Heart left ventricle (tissue), 16 donors: ENCODE measurements at regions of chr11 and their contacts with region 1.

Region 1: GRCh38 chr11:9757809-9758636 is 94.1 kb downstream of the SWAP70 start:
- DNase-seq: peak; percentile 89 to 95 (median 91)
- ATAC-seq: peak; percentile 34 to 75 (median 64)
- H3K4me3 ChIP-seq: peak overlapping the region; percentile 34 to 90 (median 74)
- H3K27ac ChIP-seq: peak overlapping the region; percentile 77 to 99 (median 92)
- H3K4me1 ChIP-seq: peaks cover 4 to 60% (median 38%) of the 10 kb centered on the region in 12 donors
- H3K27me3 ChIP-seq: no peaks in the 10 kb centered on the region
- CTCF ChIP-seq: peak; percentile 43 to 98 (median 88)
- POLR2A ChIP-seq: peak in 1 of 2 donors; percentile 42

Region 2: GRCh38 chr11:9534791-9535781 is 222.9 kb before region 1 on chr11:
- intact Hi-C with region 1: loop called in 3 of 10 experiments (anchors 10 kb)
- DNase-seq: peak; percentile 62 to 88 (median 75)
- ATAC-seq: peak; percentile 49 to 87 (median 80)
- H3K4me3 ChIP-seq: no peak overlapping the region
- H3K27ac ChIP-seq: no peak overlapping the region
- H3K4me1 ChIP-seq: peaks cover 0 to 12% (median 2%) of the 10 kb centered on the region in 12 donors
- H3K27me3 ChIP-seq: no peaks in the 10 kb centered on the region
- CTCF ChIP-seq: peak; percentile 59 to 88 (median 74)
- POLR2A ChIP-seq: no peak

Region 3: GRCh38 chr11:9580894-9581293 is 177.1 kb before region 1 on chr11:
- intact Hi-C with region 1: no loop called
- DNase-seq: no peak
- ATAC-seq: no peak
- H3K4me3 ChIP-seq: no peak overlapping the region
- H3K27ac ChIP-seq: no peak overlapping the region
- H3K4me1 ChIP-seq: peaks cover 0 to 23% (median 2%) of the 10 kb centered on the region in 12 donors
- H3K27me3 ChIP-seq: no peaks in the 10 kb centered on the region
- CTCF ChIP-seq: no peak
- POLR2A ChIP-seq: no peak

Region 4: DNA sequence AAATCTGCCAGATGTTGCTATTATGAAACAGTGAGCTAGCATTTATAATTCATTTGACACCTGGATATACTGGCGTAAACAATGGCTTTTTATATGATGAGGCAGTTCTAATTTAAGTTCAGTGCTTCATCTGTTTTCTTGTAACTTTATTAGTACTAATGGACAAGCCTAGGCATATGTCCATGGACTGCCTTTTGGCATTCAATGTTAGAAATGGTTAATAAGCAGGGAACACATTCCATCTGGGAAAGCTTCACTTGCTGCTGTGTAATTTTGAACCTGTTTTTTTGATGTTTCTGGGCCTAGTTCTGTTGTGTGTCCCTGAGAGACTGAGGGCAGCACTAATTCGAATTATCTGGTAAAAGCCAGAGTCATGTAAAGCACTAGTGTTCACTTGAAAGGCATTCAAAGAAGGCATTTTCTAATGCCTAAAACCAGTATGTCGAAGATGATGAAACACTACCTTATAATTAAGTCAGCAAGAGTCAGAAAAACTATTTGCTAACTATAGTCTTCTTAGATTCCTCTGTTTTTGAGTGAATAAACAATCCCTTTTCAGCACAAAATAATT is 44.4 kb after region 1 on chr11:
- intact Hi-C with region 1: loop called in 1 of 10 experiments (anchors 5 kb)
- DNase-seq: no peak
- ATAC-seq: peak; percentile 60 to 90 (median 83)
- H3K4me3 ChIP-seq: no peak overlapping the region
- H3K27ac ChIP-seq: peak overlapping the region; percentile 21 to 78 (median 66)
- H3K4me1 ChIP-seq: peaks cover 2 to 39% (median 28%) of the 10 kb centered on the region in 12 donors
- H3K27me3 ChIP-seq: no peaks in the 10 kb centered on the region
- CTCF ChIP-seq: no peak
- POLR2A ChIP-seq: no peak

Region 5: DNA sequence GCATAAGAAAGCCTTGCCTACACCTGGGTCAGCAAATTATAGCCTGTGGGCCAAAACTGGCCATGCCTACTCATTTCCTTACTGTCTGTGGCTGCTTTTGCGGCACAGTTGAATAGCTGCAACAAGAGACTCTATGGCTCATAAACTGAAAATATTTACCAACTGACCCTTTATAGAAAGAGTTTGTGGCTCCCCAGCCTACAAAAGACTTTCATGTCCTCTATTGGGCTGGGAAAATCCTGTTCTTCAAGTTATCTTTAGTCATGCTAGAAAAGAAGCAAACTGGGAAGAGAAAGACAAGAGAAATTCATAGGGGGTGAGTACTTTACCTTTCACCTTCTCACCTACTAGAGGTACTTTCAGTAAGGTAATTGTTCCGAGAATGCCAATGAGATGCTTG is 80.9 kb after region 1 on chr11:
- intact Hi-C with region 1: loop called in 1 of 10 experiments (anchors 10 kb)
- DNase-seq: no peak
- ATAC-seq: no peak
- H3K4me3 ChIP-seq: no peak overlapping the region
- H3K27ac ChIP-seq: no peak overlapping the region
- H3K4me1 ChIP-seq: peaks cover 0 to 7% (median 0%) of the 10 kb centered on the region in 12 donors
- H3K27me3 ChIP-seq: no peaks in the 10 kb centered on the region
- CTCF ChIP-seq: no peak
- POLR2A ChIP-seq: no peak

Region 6: DNA sequence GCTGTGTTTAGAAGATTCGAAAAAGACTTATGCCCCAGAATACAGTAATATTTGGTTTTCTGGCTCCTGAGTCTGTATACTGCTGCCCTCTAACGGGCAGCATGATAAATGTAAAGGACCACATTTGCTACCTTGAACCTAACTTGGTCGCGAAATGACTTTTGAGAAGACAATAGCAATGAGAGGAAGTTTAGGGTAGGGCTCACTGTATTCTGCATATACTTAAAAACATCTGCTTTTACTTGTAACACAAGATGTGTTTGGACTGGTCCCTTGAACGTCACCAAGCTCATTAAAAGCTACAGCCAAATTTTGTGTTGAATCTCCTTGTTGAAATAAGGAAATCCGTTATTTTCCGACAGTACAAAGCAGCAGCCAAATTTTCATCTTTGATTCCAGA is 215.0 kb after region 1 on chr11:
- intact Hi-C with region 1: loop called (anchors 1 to 10 kb)
- DNase-seq: no peak
- ATAC-seq: peak; percentile 55 to 83 (median 68)
- H3K4me3 ChIP-seq: no peak overlapping the region
- H3K27ac ChIP-seq: no peak overlapping the region
- H3K4me1 ChIP-seq: peaks cover 0 to 21% (median 9%) of the 10 kb centered on the region in 12 donors
- H3K27me3 ChIP-seq: no peaks in the 10 kb centered on the region
- CTCF ChIP-seq: peak; percentile 50 to 83 (median 70)
- POLR2A ChIP-seq: no peak

Region 7: GRCh38 chr11:10208131-10208575 is 450.1 kb after region 1 on chr11:
- intact Hi-C with region 1: loop called in 1 of 10 experiments (anchors 5 kb)
- DNase-seq: no peak
- ATAC-seq: peak in 2 of 4 donors; percentile 46 to 54
- H3K4me3 ChIP-seq: no peak overlapping the region
- H3K27ac ChIP-seq: no peak overlapping the region
- H3K4me1 ChIP-seq: peaks cover 0 to 12% (median 3%) of the 10 kb centered on the region in 12 donors
- H3K27me3 ChIP-seq: no peaks in the 10 kb centered on the region
- CTCF ChIP-seq: peak; percentile 62 to 82 (median 74)
- POLR2A ChIP-seq: no peak

Region 8: GRCh38 chr11:10322830-10323792 is 565.1 kb after region 1 on chr11:
- intact Hi-C with region 1: loop called in 9 of 10 experiments (anchors 1 to 5 kb)
- DNase-seq: peak in 2 of 5 donors; percentile 30 to 43
- ATAC-seq: peak; percentile 34 to 50 (median 38)
- H3K4me3 ChIP-seq: no peak overlapping the region
- H3K27ac ChIP-seq: peak overlapping the region in 4 of 12 donors; percentile 15 to 50 (median 24)
- H3K4me1 ChIP-seq: peaks cover 0 to 50% (median 26%) of the 10 kb centered on the region in 12 donors
- H3K27me3 ChIP-seq: no peaks in the 10 kb centered on the region
- CTCF ChIP-seq: peak; percentile 31 to 70 (median 55)
- POLR2A ChIP-seq: no peak